ENCODE measurements at regions of chrX and their contacts with region 1.

Region 1: DNA sequence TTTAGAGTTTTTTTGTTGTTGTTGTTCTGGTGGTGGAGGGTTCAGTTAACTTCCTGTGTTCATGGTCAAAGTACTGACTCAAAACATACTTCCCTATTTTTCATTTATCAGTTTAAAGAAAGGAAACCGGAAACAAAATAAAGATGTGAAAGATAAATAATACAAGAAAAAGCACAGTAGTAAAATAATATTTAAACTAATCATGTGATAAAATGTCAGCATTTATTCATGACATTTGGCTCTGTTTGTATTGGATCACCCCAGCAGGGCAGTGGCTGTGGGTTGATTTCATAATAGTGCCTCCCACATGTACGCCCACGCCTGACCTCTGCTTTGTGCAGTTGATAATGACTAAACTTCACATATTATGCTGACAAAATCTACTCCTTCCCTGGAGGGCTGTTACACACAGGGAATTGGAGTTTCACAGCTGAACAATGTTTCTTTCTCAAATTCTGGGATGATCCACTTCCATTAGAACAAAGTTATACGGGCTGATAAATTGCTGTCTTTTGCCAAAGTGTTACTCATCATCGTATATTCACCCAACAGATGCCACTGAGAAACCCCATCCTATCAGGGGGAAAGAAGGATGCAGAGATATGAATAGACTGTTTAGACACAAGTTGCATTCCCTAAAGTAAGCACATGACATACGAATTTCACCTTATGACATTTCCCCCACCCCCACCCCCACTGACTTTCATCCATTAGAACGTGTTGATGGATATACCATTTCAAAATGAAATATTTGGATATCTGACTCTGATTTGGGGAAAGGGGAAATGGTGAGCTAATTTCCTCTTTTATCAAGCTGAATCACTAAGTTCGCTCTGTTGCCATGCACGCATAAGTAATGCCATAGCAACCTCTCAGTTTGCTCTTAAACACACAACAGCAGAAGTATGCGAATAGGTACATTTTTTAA is 48.3 kb downstream of the AMELX start:
- DNase-seq: peak; percentile 80
- ATAC-seq: peak; percentile 66
- H3K4me3 ChIP-seq: peak overlapping the region in 2 of 5 experiments; percentile 20 to 31
- H3K4me3 Mint-ChIP-seq: peak overlapping the region; percentile 69
- H3K27ac ChIP-seq: peak overlapping the region; percentile 90 to 95
- H3K27ac Mint-ChIP-seq: peak overlapping the region; percentile 95
- H3K4me1 ChIP-seq: peaks cover 18 to 24% of the 10 kb centered on the region in 2 donors
- H3K4me1 Mint-ChIP-seq: peaks cover 47% of the 10 kb centered on the region
- H3K27me3 ChIP-seq: no peaks in the 10 kb centered on the region
- H3K27me3 Mint-ChIP-seq: no peaks in the 10 kb centered on the region
- CTCF ChIP-seq: no peak

Region 2: GRCh38 chrX:11351375-11352295 is 10.1 kb after region 1 on chrX:
- CTCF ChIA-PET with region 1: interaction called, 3 read pairs
- POLR2A ChIA-PET with region 1: no interaction called
- intact Hi-C with region 1: loop called (anchors 1 kb)
- DNase-seq: peak; percentile 60
- ATAC-seq: peak; percentile 52
- H3K4me3 ChIP-seq: no peak overlapping the region
- H3K4me3 Mint-ChIP-seq: peak overlapping the region; percentile 26
- H3K27ac ChIP-seq: peak overlapping the region; percentile 82 to 93
- H3K27ac Mint-ChIP-seq: peak overlapping the region; percentile 90
- H3K4me1 ChIP-seq: peaks cover 25 to 27% of the 10 kb centered on the region in 2 donors
- H3K4me1 Mint-ChIP-seq: peaks cover 36% of the 10 kb centered on the region
- H3K27me3 ChIP-seq: no peaks in the 10 kb centered on the region
- H3K27me3 Mint-ChIP-seq: no peaks in the 10 kb centered on the region
- CTCF ChIP-seq: no peak

Region 3: GRCh38 chrX:11375614-11376119 is 34.1 kb after region 1 on chrX:
- CTCF ChIA-PET with region 1: no interaction called
- POLR2A ChIA-PET with region 1: no interaction called
- intact Hi-C with region 1: loop called (anchors 5 kb)
- DNase-seq: no peak
- ATAC-seq: no peak
- H3K4me3 ChIP-seq: no peak overlapping the region
- H3K4me3 Mint-ChIP-seq: no peak overlapping the region
- H3K27ac ChIP-seq: no peak overlapping the region
- H3K27ac Mint-ChIP-seq: no peak overlapping the region
- H3K4me1 ChIP-seq: no peaks in the 10 kb centered on the region
- H3K4me1 Mint-ChIP-seq: peaks cover 2% of the 10 kb centered on the region
- H3K27me3 ChIP-seq: no peaks in the 10 kb centered on the region
- H3K27me3 Mint-ChIP-seq: peaks cover 7% of the 10 kb centered on the region
- CTCF ChIP-seq: no peak

Region 4: GRCh38 chrX:11543249-11543648 is 201.7 kb after region 1 on chrX:
- CTCF ChIA-PET with region 1: no interaction called
- POLR2A ChIA-PET with region 1: no interaction called
- intact Hi-C with region 1: no loop called
- DNase-seq: no peak
- ATAC-seq: no peak
- H3K4me3 ChIP-seq: no peak overlapping the region
- H3K4me3 Mint-ChIP-seq: no peak overlapping the region
- H3K27ac ChIP-seq: no peak overlapping the region
- H3K27ac Mint-ChIP-seq: no peak overlapping the region
- H3K4me1 ChIP-seq: no peaks in the 10 kb centered on the region
- H3K4me1 Mint-ChIP-seq: no peaks in the 10 kb centered on the region
- H3K27me3 ChIP-seq: peaks cover 0 to 4% (median 0%) of the 10 kb centered on the region in 4 experiments
- H3K27me3 Mint-ChIP-seq: peaks cover 3% of the 10 kb centered on the region
- CTCF ChIP-seq: no peak